ENCODE measurements at regions of chr7 and their contacts with region 1.

Region 1: DNA sequence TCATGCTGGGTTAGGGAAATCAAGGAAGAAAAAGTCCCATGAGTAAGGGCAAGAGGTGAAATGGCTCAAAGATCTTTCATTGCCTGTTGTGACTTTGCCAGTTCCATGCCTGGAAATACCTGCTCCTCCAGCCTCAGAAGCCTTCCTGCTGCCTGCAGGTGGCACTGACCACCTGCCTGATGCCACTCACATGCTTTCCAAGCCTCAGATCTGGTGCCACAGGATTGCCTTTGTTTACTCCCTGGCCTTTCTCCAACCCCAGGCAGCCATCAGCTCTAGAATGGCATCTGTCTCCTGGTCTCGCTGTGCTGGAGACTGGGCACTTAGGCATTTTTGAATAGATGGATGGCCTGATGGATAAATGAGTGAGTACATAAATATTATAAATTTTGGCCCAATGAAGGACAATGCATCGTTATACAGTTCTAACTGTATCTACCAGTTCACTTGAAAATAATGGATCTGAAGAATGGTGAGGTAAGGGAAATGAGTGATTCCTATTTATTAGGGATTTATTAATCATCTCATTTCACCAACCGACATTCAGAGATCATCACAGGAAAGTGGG is 657.2 kb downstream of the INHBA start:
- DNase-seq: peak; percentile 73 to 80
- H3K4me3 ChIP-seq: no peak overlapping the region
- H3K27ac ChIP-seq: no peak overlapping the region
- H3K4me1 ChIP-seq: peaks cover 19% of the 10 kb centered on the region
- H3K27me3 ChIP-seq: no peaks in the 10 kb centered on the region
- CTCF ChIP-seq: peak; percentile 70

Region 2: GRCh38 chr7:40918701-40919271 is 126.9 kb before region 1 on chr7:
- CTCF ChIA-PET with region 1: no interaction called
- POLR2A ChIA-PET with region 1: no interaction called
- intact Hi-C with region 1: loop called (anchors 2 kb)
- DNase-seq: peak; percentile 55 to 91
- H3K4me3 ChIP-seq: no peak overlapping the region
- H3K27ac ChIP-seq: peak overlapping the region; percentile 85
- H3K4me1 ChIP-seq: peaks cover 69% of the 10 kb centered on the region
- H3K27me3 ChIP-seq: no peaks in the 10 kb centered on the region
- CTCF ChIP-seq: no peak

Region 3: DNA sequence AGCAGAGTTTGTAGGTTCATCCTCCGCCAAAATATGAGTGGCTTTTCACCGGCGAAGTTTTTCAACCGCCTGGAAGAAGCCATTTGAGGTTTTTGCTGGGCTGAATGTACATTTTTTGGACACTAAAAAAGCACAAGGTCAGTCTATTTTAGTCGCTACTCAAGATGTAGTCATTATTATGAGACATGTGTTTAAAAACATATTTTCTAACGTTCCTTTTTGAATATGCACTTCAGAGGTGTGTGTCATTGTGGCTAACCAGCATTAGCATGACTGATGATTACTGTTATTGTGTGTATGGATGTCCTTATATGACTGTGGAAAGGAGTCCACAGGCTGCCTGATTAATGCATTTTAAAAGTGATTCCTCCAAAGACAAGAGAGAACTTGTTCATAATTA is 51.9 kb after region 1 on chr7:
- CTCF ChIA-PET with region 1: no interaction called
- POLR2A ChIA-PET with region 1: no interaction called
- intact Hi-C with region 1: no loop called
- DNase-seq: no peak
- H3K4me3 ChIP-seq: no peak overlapping the region
- H3K27ac ChIP-seq: no peak overlapping the region
- H3K4me1 ChIP-seq: no peaks in the 10 kb centered on the region
- H3K27me3 ChIP-seq: no peaks in the 10 kb centered on the region
- CTCF ChIP-seq: no peak

Region 4: GRCh38 chr7:41189866-41190265 is 144.2 kb after region 1 on chr7:
- CTCF ChIA-PET with region 1: no interaction called
- POLR2A ChIA-PET with region 1: no interaction called
- intact Hi-C with region 1: loop called (anchors 1 kb)
- DNase-seq: peak; percentile 61 to 99
- H3K4me3 ChIP-seq: no peak overlapping the region
- H3K27ac ChIP-seq: peak overlapping the region; percentile 93
- H3K4me1 ChIP-seq: peaks cover 46% of the 10 kb centered on the region
- H3K27me3 ChIP-seq: no peaks in the 10 kb centered on the region
- CTCF ChIP-seq: no peak

Region 5: GRCh38 chr7:41292487-41292886 is 246.8 kb after region 1 on chr7:
- CTCF ChIA-PET with region 1: no interaction called
- POLR2A ChIA-PET with region 1: no interaction called
- intact Hi-C with region 1: loop called (anchors 5 kb)
- DNase-seq: peak; percentile 25 to 78
- H3K4me3 ChIP-seq: no peak overlapping the region
- H3K27ac ChIP-seq: no peak overlapping the region
- H3K4me1 ChIP-seq: 0 out of 2 replicates have a peak, but pooled peaks cover 8% of the 10 kb centered on the region
- H3K27me3 ChIP-seq: no peaks in the 10 kb centered on the region
- CTCF ChIP-seq: no peak

Region 6: DNA sequence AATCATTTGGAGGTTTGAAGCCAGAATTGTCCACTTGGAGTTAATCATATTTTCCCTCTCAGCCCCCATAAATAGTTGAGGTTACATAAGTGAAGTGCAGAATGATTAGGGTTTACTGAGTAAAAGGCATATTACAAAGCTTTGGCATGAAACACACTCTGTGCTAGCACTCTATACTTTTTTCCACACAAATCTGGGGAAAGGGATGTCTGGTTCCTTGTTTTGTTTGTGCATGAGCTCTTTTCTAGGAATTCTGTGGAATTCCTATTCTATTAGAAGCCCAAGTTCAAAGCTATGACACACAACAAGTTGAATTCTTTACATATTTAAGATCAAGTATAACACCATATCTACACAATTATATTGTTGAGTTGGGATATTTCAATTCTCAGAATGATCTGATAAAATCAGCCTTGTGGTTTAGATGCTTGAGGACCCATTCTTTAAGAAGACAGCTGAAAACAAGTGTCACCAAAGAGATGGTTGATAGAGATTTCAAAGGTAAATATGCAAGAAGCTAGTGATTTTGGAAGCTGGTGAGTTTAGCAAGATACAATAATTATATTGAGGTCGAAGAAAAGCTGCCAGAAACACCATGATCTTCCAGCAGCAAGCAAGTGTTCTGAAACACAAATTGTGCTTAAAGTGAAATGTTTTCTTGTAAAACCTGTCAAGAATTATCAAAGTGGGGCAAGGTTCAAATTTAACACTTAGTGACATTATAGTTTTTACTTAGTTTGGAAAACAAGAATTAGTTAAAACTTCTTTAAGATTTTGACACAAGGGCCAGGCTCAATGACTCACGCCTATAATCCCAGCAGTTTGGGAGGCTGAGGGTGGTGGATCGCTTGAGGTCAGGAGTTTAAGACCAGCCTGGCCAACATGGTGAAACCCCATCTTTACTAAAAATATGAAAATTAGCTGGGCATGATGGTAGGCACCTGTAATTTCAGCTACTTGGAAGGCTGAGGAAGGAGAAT is 534.6 kb after region 1 on chr7:
- CTCF ChIA-PET with region 1: interaction called, 3 read pairs
- POLR2A ChIA-PET with region 1: no interaction called
- intact Hi-C with region 1: loop called (anchors 2 kb)
- DNase-seq: peak; percentile 40 to 99
- H3K4me3 ChIP-seq: no peak overlapping the region
- H3K27ac ChIP-seq: peak overlapping the region; percentile 74
- H3K4me1 ChIP-seq: peaks cover 35% of the 10 kb centered on the region
- H3K27me3 ChIP-seq: no peaks in the 10 kb centered on the region
- CTCF ChIP-seq: no peak

Measured in PC-9 (cell line).